ENCODE measurements at regions of chr16 and their contacts with region 1.

Region 1: DNA sequence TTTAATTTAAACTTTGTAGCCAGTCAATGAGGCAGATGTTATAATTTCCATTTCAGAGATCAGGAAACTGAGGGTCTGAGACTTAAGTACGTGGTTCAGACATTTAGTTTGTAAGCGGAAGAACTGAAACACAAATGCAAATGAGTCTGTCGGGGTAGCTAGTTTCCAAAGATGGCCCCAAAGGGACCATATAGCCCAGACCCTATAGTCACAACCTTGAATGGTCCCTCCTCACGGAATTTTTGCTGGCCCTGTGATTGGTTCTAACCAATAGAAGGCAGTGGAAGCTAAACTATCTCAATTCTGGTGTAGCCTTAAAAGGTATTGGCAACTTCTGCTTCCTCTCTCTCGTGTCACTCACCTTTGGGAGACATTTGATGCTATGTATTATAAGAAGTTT is 7.5 kb upstream of the BCO1 start:
- DNase-seq: no peak
- ATAC-seq: no peak
- H3K4me3 Mint-ChIP-seq: no peak overlapping the region
- H3K27ac Mint-ChIP-seq: no peak overlapping the region
- H3K4me1 Mint-ChIP-seq: no peaks in the 10 kb centered on the region
- H3K27me3 Mint-ChIP-seq: peaks cover 3% of the 10 kb centered on the region
- CTCF ChIP-seq: no peak

Region 2: GRCh38 chr16:81261049-81261648 is 30.1 kb after region 1 on chr16:
- CTCF ChIA-PET with region 1: interaction called, 10 read pairs
- POLR2A ChIA-PET with region 1: no interaction called
- intact Hi-C with region 1: no loop called
- DNase-seq: peak; percentile 53
- ATAC-seq: peak; percentile 55
- H3K4me3 Mint-ChIP-seq: no peak overlapping the region
- H3K27ac Mint-ChIP-seq: no peak overlapping the region
- H3K4me1 Mint-ChIP-seq: no peaks in the 10 kb centered on the region
- H3K27me3 Mint-ChIP-seq: peaks cover 4% of the 10 kb centered on the region
- CTCF ChIP-seq: peak; percentile 71

Measured in activated CD8-positive, alpha-beta T cell treated with anti-CD3 and anti-CD28 coated beads for 36 hours (primary cell).